Calu3 (cell line): ENCODE measurements at regions of chr18 and their contacts with region 1.

Region 1: DNA sequence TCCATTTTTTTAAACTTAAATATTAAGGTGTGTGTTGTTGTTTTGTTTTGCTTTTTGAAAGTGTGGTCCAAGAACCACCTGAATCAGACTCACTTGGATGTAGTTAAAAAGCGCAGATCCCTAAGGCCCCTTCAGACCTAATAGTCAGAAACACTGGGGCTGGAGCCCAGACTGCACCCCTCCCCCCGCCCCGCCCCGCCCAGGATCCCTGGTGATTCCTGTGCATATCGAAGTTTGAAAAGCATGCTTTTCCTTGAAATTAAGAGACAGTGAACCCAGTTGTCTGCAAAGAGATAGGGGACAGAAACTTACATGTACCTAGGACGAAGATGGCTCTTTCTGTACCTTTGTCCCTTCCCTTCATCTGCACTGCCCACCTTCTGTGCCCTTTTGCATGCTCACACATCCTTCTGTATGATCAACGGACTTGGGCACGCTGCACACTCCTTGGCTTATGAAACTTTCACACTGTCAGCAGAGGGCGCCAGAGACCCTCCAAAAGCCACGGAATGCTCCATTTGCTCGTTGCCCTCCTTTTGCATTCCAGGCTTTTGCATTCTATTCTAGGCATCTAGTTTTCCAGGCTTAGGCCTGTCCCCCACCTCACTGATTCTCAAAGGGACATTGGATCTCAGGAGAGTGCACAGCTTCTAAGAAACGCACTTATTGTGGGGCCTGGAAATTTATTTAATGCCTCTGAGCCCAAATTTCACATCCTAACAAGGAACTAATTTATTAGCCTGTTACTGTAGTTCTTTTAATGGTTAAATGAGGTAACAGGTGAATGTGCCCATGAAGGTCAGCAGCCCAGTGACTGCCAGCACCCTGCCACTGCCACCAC is 32.8 kb upstream of the SLC14A1 start:
- DNase-seq: peak; percentile 83
- H3K4me3 Mint-ChIP-seq: no peak overlapping the region
- H3K27ac Mint-ChIP-seq: no peak overlapping the region
- H3K4me1 Mint-ChIP-seq: no peaks in the 10 kb centered on the region
- H3K27me3 Mint-ChIP-seq: peaks cover 15% of the 10 kb centered on the region
- CTCF ChIP-seq: peak; percentile 90

Region 2: GRCh38 chr18:45617284-45617683 is 73.9 kb before region 1 on chr18:
- CTCF ChIA-PET with region 1: no interaction called
- intact Hi-C with region 1: no loop called
- DNase-seq: peak; percentile 49
- H3K4me3 Mint-ChIP-seq: no peak overlapping the region
- H3K27ac Mint-ChIP-seq: no peak overlapping the region
- H3K4me1 Mint-ChIP-seq: peaks cover 6% of the 10 kb centered on the region
- H3K27me3 Mint-ChIP-seq: peaks cover 46% of the 10 kb centered on the region
- CTCF ChIP-seq: no peak

Region 3: GRCh38 chr18:45879681-45880655 is 188.8 kb after region 1 on chr18:
- CTCF ChIA-PET with region 1: interaction called, 8 read pairs
- intact Hi-C with region 1: loop called (anchors 1 kb)
- DNase-seq: peak; percentile 78
- H3K4me3 Mint-ChIP-seq: no peak overlapping the region
- H3K27ac Mint-ChIP-seq: no peak overlapping the region
- H3K4me1 Mint-ChIP-seq: peaks cover 11% of the 10 kb centered on the region
- H3K27me3 Mint-ChIP-seq: no peaks in the 10 kb centered on the region
- CTCF ChIP-seq: peak; percentile 98

Region 4: GRCh38 chr18:45910405-45911023 is 219.3 kb after region 1 on chr18:
- CTCF ChIA-PET with region 1: no interaction called
- intact Hi-C with region 1: loop called (anchors 1 kb)
- DNase-seq: peak; percentile 69
- H3K4me3 Mint-ChIP-seq: no peak overlapping the region
- H3K27ac Mint-ChIP-seq: no peak overlapping the region
- H3K4me1 Mint-ChIP-seq: no peaks in the 10 kb centered on the region
- H3K27me3 Mint-ChIP-seq: no peaks in the 10 kb centered on the region
- CTCF ChIP-seq: peak; percentile 83

Region 5: DNA sequence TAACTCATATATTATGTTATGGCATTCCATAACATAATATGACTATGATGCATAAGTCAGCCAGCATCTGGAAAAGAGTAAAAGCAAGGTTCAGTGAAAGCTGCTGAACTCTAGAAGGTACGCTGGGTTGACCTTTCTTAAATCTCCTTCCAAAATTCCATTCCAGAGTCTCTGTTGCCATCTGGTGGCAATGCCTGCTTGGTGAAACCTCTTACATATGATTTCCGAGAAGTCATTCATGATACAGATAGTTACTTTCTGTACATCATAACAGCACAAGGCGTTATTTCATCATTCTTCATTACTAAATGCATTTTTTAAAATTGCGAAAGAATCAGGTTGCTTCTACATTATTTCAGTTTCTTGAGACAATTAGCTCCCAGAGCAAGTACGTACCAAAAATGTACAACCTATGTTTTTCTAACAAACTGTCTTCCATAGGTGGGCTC is 282.9 kb after region 1 on chr18:
- CTCF ChIA-PET with region 1: no interaction called
- intact Hi-C with region 1: loop called (anchors 1 kb)
- DNase-seq: peak; percentile 62
- H3K4me3 Mint-ChIP-seq: no peak overlapping the region
- H3K27ac Mint-ChIP-seq: no peak overlapping the region
- H3K4me1 Mint-ChIP-seq: peaks cover 21% of the 10 kb centered on the region
- H3K27me3 Mint-ChIP-seq: no peaks in the 10 kb centered on the region
- CTCF ChIP-seq: peak; percentile 68